ENCODE measurements at regions of chr6 and their contacts with region 1.

Region 1: GRCh38 chr6:125273965-125274364 is 27.8 kb downstream of the HDDC2 start:
- DNase-seq: peak; percentile 99
- H3K4me3 Mint-ChIP-seq: peak overlapping the region; percentile 18
- H3K27ac Mint-ChIP-seq: peak overlapping the region; percentile 79
- H3K4me1 Mint-ChIP-seq: peaks cover 30% of the 10 kb centered on the region
- H3K27me3 Mint-ChIP-seq: no peaks in the 10 kb centered on the region
- CTCF ChIP-seq: no peak

Region 2: GRCh38 chr6:124742971-124743370 is 531.0 kb before region 1 on chr6:
- CTCF ChIA-PET with region 1: no interaction called
- POLR2A ChIA-PET with region 1: no interaction called
- intact Hi-C with region 1: no loop called
- DNase-seq: peak; percentile 57
- H3K4me3 Mint-ChIP-seq: no peak overlapping the region
- H3K27ac Mint-ChIP-seq: no peak overlapping the region
- H3K4me1 Mint-ChIP-seq: peaks cover 28% of the 10 kb centered on the region
- H3K27me3 Mint-ChIP-seq: peaks cover 30% of the 10 kb centered on the region
- CTCF ChIP-seq: no peak

Region 3: DNA sequence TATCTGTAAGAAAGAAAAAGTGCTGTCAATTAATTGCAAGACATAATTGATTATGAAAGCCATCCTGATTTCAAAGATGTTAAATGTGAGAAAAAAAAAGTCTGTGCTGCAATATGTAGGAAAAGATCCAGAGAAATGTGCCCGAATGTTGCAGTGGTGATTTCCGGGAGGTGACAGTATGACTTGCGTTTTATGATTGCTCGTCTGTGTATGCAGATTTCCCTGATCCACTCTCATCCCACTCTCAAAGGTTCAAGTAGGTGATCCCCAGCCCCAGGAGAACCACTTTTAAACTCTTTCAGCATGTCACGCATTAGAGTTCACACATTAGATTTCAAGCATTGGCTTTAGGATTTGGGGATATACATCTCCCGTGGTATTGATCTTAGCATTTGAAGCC is 62.6 kb before region 1 on chr6:
- CTCF ChIA-PET with region 1: no interaction called
- POLR2A ChIA-PET with region 1: no interaction called
- intact Hi-C with region 1: no loop called
- DNase-seq: no peak
- H3K4me3 Mint-ChIP-seq: no peak overlapping the region
- H3K27ac Mint-ChIP-seq: no peak overlapping the region
- H3K4me1 Mint-ChIP-seq: peaks cover 13% of the 10 kb centered on the region
- H3K27me3 Mint-ChIP-seq: no peaks in the 10 kb centered on the region
- CTCF ChIP-seq: no peak

Region 4: GRCh38 chr6:125262016-125263013 is 11.7 kb before region 1 on chr6:
- CTCF ChIA-PET with region 1: interaction called, 14 read pairs
- POLR2A ChIA-PET with region 1: interaction called, 3 read pairs
- intact Hi-C with region 1: no loop called
- DNase-seq: no peak
- H3K4me3 Mint-ChIP-seq: no peak overlapping the region
- H3K27ac Mint-ChIP-seq: no peak overlapping the region
- H3K4me1 Mint-ChIP-seq: peaks cover 14% of the 10 kb centered on the region
- H3K27me3 Mint-ChIP-seq: no peaks in the 10 kb centered on the region
- CTCF ChIP-seq: no peak

Region 5: GRCh38 chr6:125301435-125302391 is 27.7 kb after region 1 on chr6 and contains the start of gene HDDC2:
- CTCF ChIA-PET with region 1: interaction called, 4 read pairs
- POLR2A ChIA-PET with region 1: interaction called, 22 read pairs
- intact Hi-C with region 1: loop called (anchors 2 kb)
- DNase-seq: peak; percentile 60
- H3K4me3 Mint-ChIP-seq: peak within 1 kb of the TSS; percentile 79
- H3K27ac Mint-ChIP-seq: peak within 1 kb of the TSS; percentile 33
- H3K4me1 Mint-ChIP-seq: peaks cover 31% of the 10 kb centered on the region
- H3K27me3 Mint-ChIP-seq: peaks cover 7% of the 10 kb centered on the region
- CTCF ChIP-seq: no peak
- total RNA-seq, gene HDDC2: 141 and 167 TPM in 2 replicates

Measured in MCF 10A (cell line).